OCI-LY7 (cell line): ENCODE measurements at regions of chr20 and their contacts with region 1.

Region 1: GRCh38 chr20:40741507-40742106 is 52.6 kb upstream of the MAFB start:
- DNase-seq: peak; percentile 88
- H3K4me3 ChIP-seq: no peak overlapping the region
- H3K27ac ChIP-seq: no peak overlapping the region
- H3K4me1 ChIP-seq: peaks cover 55% of the 10 kb centered on the region
- CTCF ChIP-seq: peak; percentile 97

Region 2: DNA sequence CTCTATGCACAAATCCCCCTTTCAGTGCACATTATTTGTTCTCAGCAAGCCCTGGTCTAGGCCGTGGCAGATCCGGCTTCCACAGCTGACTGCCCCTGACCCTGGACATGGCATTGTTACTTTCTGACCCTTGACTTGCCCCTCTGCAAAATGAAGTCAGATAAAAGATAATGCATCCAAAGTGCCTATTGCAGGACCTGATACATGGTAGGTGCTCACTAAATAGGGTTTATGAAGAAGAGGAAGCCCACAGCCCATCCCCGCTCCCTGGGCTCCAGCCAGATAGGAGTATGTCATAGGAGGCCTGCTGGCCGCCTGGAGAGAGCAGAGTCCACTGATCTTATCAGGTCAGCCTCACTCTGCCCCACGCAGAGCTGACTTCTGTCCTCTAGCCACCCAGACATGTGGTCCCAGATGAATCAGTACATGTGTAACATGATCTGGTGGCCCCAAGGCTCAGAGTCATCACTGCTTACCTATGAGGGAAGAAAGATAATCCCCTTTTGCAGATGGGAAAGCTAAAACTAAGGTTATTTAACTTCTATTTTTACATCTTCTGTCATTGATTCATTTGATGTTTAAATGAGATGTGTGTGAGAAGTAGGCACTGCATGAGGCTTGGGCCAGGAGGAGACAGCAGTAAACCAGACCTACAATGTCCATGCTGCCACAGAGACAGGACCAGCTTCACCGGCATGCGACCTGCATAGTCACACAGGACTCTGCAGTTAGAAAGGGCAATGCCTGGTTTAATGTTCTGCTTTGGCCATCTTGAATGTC is 73.0 kb before region 1 on chr20:
- CTCF ChIA-PET with region 1: no interaction called
- POLR2A ChIA-PET with region 1: no interaction called
- intact Hi-C with region 1: no loop called
- DNase-seq: no peak
- H3K4me3 ChIP-seq: no peak overlapping the region
- H3K27ac ChIP-seq: no peak overlapping the region
- H3K4me1 ChIP-seq: no peaks in the 10 kb centered on the region
- CTCF ChIP-seq: no peak

Region 3: DNA sequence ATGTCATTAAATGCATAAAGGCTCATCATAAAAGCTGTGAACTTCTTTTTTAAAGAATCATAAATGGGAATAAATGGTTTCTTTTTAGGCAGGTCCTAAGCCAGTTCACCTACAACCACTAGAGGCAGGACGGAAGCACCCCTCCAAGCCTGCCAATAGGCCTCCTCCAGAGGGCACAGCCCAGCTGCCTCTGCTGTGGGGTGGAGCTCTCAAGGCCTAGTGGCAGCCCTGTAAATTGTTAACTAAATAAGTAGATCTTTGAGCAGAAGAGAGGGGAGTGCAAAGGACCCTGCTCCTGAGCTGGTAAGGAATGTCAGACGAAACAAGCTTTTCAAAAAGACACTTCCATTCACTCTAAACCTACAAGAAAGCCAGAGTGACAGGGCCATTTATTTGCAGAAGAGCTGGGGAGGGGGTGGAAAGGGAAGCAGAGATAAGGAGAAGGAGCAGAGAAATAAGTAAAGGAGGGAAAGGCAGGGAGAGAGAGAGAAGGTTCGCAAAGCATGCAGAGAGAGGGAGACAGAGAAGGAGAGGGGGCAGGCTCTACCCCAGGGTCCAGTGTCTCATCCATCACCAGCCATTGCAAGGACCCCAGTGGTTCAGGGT is 34.5 kb before region 1 on chr20:
- CTCF ChIA-PET with region 1: interaction called, 10 read pairs
- POLR2A ChIA-PET with region 1: interaction called, 3 read pairs
- intact Hi-C with region 1: no loop called
- DNase-seq: peak; percentile 71
- H3K4me3 ChIP-seq: no peak overlapping the region
- H3K27ac ChIP-seq: no peak overlapping the region
- H3K4me1 ChIP-seq: peaks cover 9% of the 10 kb centered on the region
- CTCF ChIP-seq: peak; percentile 73

Region 4: GRCh38 chr20:40797425-40797824 is 55.8 kb after region 1 on chr20:
- CTCF ChIA-PET with region 1: interaction called, 3 read pairs
- POLR2A ChIA-PET with region 1: interaction called, 4 read pairs
- intact Hi-C with region 1: loop called (anchors 5 kb)
- DNase-seq: peak; percentile 61
- H3K4me3 ChIP-seq: no peak overlapping the region
- H3K27ac ChIP-seq: no peak overlapping the region
- H3K4me1 ChIP-seq: no peaks in the 10 kb centered on the region
- CTCF ChIP-seq: peak; percentile 86

Region 5: DNA sequence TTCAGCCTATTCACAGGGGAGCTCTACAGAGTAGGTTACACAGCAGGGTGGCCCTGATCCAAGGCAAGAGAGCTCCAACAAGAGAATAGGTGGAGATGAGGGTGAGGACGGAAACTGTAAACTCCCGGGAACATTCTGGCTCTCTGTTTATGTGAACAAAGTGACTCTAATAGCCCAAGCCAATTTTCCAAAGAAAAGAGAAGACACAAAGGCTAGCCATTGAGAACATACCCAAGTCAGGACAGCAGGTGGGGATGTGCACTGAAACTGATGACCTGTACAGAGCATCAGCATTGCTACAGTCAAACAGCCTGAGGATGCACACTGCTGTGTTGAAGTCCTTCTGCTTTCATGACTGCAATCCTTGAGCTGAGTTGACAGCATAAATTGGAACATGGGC is 151.0 kb after region 1 on chr20:
- CTCF ChIA-PET with region 1: no interaction called
- POLR2A ChIA-PET with region 1: no interaction called
- intact Hi-C with region 1: loop called (anchors 5 kb)
- DNase-seq: peak; percentile 85
- H3K4me3 ChIP-seq: no peak overlapping the region
- H3K27ac ChIP-seq: no peak overlapping the region
- H3K4me1 ChIP-seq: peaks cover 46% of the 10 kb centered on the region
- CTCF ChIP-seq: peak; percentile 75

Region 6: GRCh38 chr20:40938020-40938419 is 196.4 kb after region 1 on chr20:
- CTCF ChIA-PET with region 1: interaction called, 3 read pairs
- POLR2A ChIA-PET with region 1: interaction called, 25 read pairs
- intact Hi-C with region 1: loop called (anchors 1 kb)
- DNase-seq: peak; percentile 45
- H3K4me3 ChIP-seq: no peak overlapping the region
- H3K27ac ChIP-seq: no peak overlapping the region
- H3K4me1 ChIP-seq: peaks cover 70% of the 10 kb centered on the region
- CTCF ChIP-seq: peak; percentile 76

Region 7: GRCh38 chr20:40945754-40946450 is 204.3 kb after region 1 on chr20:
- CTCF ChIA-PET with region 1: interaction called, 21 read pairs
- POLR2A ChIA-PET with region 1: interaction called, 25 read pairs
- intact Hi-C with region 1: loop called (anchors 1 kb)
- DNase-seq: peak; percentile 81
- H3K4me3 ChIP-seq: no peak overlapping the region
- H3K27ac ChIP-seq: no peak overlapping the region
- H3K4me1 ChIP-seq: peaks cover 53% of the 10 kb centered on the region
- CTCF ChIP-seq: peak; percentile 96

Region 8: GRCh38 chr20:40980106-40980827 is 238.7 kb after region 1 on chr20:
- CTCF ChIA-PET with region 1: no interaction called
- POLR2A ChIA-PET with region 1: no interaction called
- intact Hi-C with region 1: no loop called
- DNase-seq: no peak
- H3K4me3 ChIP-seq: no peak overlapping the region
- H3K27ac ChIP-seq: no peak overlapping the region
- H3K4me1 ChIP-seq: peaks cover 45% of the 10 kb centered on the region
- CTCF ChIP-seq: no peak

Region 9: GRCh38 chr20:41205313-41205712 is 463.7 kb after region 1 on chr20:
- CTCF ChIA-PET with region 1: no interaction called
- POLR2A ChIA-PET with region 1: no interaction called
- intact Hi-C with region 1: no loop called
- DNase-seq: no peak
- H3K4me3 ChIP-seq: no peak overlapping the region
- H3K27ac ChIP-seq: no peak overlapping the region
- H3K4me1 ChIP-seq: no peaks in the 10 kb centered on the region
- CTCF ChIP-seq: no peak

Region 10: DNA sequence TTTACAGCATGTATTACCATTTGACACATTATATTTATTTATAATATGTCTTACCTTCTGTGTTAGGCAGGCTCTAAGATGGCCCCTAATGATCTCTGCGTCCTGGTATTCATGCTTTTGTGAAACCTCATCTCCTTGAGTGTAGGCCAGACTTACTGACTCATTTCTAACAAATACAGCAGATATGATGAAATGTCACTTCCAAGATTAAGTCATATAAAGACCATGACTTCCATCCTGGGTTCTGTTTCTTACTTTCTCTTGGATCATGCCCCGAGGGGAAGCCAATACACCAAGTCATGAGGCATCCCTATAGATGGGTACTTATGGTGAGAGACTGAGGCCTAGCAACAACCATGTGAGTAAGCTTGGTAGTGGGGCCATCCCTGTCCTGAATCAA is 545.7 kb after region 1 on chr20:
- CTCF ChIA-PET with region 1: no interaction called
- POLR2A ChIA-PET with region 1: no interaction called
- intact Hi-C with region 1: no loop called
- DNase-seq: no peak
- H3K4me3 ChIP-seq: no peak overlapping the region
- H3K27ac ChIP-seq: no peak overlapping the region
- H3K4me1 ChIP-seq: no peaks in the 10 kb centered on the region
- CTCF ChIP-seq: no peak